Tibial artery (tissue), 4 donors: ENCODE measurements at regions of chr7 and their contacts with region 1.

Region 1: GRCh38 chr7:151687523-151688218 is 168.0 kb upstream of the RHEB start:
- DNase-seq: peak; percentile 78 to 92
- H3K4me3 ChIP-seq: no peak overlapping the region
- H3K27ac ChIP-seq: peak overlapping the region; percentile 81 to 82
- H3K4me1 ChIP-seq: peaks cover 9 to 51% (median 32%) of the 10 kb centered on the region in 4 donors
- H3K27me3 ChIP-seq: no peaks in the 10 kb centered on the region
- CTCF ChIP-seq: no peak

Region 2: DNA sequence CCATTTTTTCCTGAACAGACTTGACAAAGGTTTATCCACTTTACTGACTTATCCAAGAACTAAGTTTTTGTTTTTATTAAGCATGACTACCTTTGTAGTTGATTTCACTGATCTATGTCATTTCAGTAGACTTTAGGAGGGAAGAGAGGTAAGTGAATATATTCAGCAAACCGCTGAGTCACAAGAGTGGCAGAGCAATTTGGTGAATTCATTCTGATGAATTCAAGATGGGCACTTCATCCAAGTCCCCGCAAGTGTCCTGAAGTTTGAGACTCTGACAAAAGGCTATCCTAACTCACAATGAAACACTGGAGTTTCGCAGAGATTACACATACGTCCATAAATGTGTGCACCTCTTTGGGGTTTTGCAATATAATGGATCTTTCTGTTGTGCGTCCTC is 65.7 kb before region 1 on chr7:
- intact Hi-C with region 1: no loop called
- DNase-seq: no peak
- H3K4me3 ChIP-seq: no peak overlapping the region
- H3K27ac ChIP-seq: no peak overlapping the region
- H3K4me1 ChIP-seq: peaks cover 0 to 54% (median 12%) of the 10 kb centered on the region in 4 donors
- H3K27me3 ChIP-seq: no peaks in the 10 kb centered on the region
- CTCF ChIP-seq: no peak

Region 3: GRCh38 chr7:151631968-151632749 is 55.5 kb before region 1 on chr7:
- intact Hi-C with region 1: loop called (anchors 5 kb)
- DNase-seq: peak; percentile 60 to 88
- H3K4me3 ChIP-seq: peak overlapping the region; percentile 78 to 81
- H3K27ac ChIP-seq: peak overlapping the region; percentile 91 to 94
- H3K4me1 ChIP-seq: peaks cover 0 to 58% (median 30%) of the 10 kb centered on the region in 4 donors
- H3K27me3 ChIP-seq: no peaks in the 10 kb centered on the region
- CTCF ChIP-seq: peak in 1 of 2 experiments; percentile 22

Region 4: DNA sequence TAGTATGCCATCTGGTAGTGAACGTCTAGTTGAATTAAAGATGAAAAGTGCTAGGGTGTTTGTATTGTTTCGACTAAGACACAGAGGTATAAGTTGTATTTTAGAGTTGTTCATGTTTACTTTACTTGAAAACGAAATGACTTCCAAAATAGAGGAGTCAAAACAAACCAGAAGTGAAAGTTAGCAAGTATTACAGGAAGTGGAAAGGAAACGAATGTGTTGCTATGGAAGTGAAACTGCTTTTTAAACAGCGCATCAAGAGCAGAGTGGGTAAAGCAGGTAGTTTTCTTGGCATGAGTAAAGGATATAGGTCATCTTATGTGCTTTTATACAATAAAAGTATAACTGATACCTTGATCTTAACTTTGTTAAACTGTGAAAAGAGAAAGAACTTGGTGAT is 248.5 kb after region 1 on chr7:
- intact Hi-C with region 1: no loop called
- DNase-seq: no peak
- H3K4me3 ChIP-seq: no peak overlapping the region
- H3K27ac ChIP-seq: no peak overlapping the region
- H3K4me1 ChIP-seq: peaks cover 0 to 8% (median 0%) of the 10 kb centered on the region in 4 donors
- H3K27me3 ChIP-seq: peaks cover 0 to 2% of the 10 kb centered on the region in 2 donors
- CTCF ChIP-seq: no peak